ENCODE measurements at regions of chr19 and their contacts with region 1.

Region 1: DNA sequence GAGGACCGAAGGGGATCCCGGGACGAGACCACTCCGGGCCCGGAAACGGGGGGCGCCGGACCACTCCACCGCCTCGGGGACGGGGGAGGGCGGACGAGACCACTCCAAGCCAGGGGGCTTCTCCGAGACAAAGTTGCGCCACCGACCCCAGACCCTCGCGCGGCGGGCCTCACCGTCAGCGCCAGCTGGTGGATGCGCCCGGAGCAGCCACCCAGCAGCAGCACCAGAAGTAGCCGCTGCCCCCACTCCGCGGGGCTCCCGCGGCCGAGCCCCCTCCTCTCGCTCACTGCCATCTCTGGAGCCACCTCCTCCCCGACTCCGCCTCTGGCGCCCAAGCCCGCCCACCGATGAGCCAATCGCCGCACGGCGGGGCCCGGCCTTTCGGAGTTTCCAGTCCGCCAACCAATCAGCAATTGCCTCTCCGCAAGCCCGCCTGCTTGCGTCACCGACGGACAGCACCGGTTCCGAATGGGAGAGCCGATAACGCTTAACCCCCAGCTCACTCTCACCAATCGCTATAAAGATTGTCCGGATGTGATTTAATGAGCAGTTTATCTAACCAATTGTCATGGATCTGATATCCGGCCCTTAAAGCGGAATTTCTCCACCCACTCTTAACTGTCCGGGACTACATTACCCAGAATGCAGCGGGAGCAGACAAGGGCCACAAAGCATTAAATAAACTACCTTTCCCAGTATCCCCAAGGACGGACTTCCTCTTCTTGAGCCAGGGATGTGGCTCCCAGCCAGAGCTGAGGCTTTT is at the start of gene GPR108:
- DNase-seq: peak; percentile 100
- H3K4me3 Mint-ChIP-seq: peak within 1 kb of the TSS; percentile 98
- H3K27ac Mint-ChIP-seq: peak within 1 kb of the TSS; percentile 98
- H3K4me1 Mint-ChIP-seq: peaks cover 34% of the 10 kb centered on the region
- H3K27me3 Mint-ChIP-seq: no peaks in the 10 kb centered on the region
- total RNA-seq, gene GPR108: 72.1 to 75.4 TPM

Region 2: DNA sequence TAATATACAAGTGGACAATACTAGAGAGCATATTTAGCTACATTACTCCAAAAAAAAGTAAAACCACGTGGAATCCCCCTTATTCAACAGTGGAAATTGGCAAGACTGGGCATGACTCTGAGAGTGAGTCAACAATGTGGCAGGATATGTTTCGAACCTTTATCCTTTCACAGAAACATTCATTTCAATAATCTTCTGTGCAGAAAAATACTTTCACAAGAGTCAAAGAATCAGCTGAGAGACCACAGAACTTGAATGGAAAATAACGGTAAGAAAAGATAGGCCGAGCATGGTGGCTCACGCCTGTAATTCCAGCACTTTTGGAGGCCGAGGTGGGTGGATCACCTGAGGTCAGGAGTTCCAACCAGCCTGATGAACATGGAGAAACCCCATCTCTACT is 121.5 kb before region 1 on chr19:
- CTCF ChIA-PET with region 1: no interaction called
- POLR2A ChIA-PET with region 1: interaction called, 3 read pairs
- intact Hi-C with region 1: loop called (anchors 5 kb)
- DNase-seq: peak; percentile 64
- H3K4me3 Mint-ChIP-seq: no peak overlapping the region
- H3K27ac Mint-ChIP-seq: peak overlapping the region; percentile 59
- H3K4me1 Mint-ChIP-seq: peaks cover 32% of the 10 kb centered on the region
- H3K27me3 Mint-ChIP-seq: peaks cover 28% of the 10 kb centered on the region

Region 3: DNA sequence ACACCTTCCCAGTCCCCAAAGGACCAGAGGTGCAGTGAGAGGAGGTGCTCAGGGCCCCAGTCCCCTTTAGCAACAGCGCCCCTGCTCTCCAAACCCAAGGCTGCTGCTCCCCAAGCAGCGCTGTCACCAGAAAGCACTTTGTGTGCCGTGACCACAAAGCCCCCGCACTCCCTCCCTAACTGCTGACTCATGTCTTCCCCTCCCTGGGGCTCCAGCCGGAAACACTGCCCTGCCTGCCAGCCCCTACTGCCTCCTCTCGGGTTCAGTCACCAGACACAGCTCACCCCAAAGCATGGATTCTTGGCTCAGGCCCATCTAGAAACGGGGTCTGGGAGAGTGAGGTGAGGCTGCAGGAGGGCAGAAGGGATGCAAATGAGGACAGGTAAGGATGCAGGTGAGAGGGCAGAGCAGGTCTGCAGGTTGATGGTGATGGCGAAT is 62.6 kb before region 1 on chr19:
- CTCF ChIA-PET with region 1: interaction called, 7 read pairs
- POLR2A ChIA-PET with region 1: interaction called, 9 read pairs
- intact Hi-C with region 1: loop called (anchors 1 kb)
- DNase-seq: peak; percentile 98
- H3K4me3 Mint-ChIP-seq: peak overlapping the region; percentile 62
- H3K27ac Mint-ChIP-seq: peak overlapping the region; percentile 79
- H3K4me1 Mint-ChIP-seq: peaks cover 69% of the 10 kb centered on the region
- H3K27me3 Mint-ChIP-seq: peaks cover 3% of the 10 kb centered on the region

Region 4: GRCh38 chr19:6801485-6802086 is 64.1 kb after region 1 on chr19:
- CTCF ChIA-PET with region 1: interaction called, 28 read pairs
- POLR2A ChIA-PET with region 1: interaction called, 9 read pairs
- intact Hi-C with region 1: loop called (anchors 1 kb)
- DNase-seq: peak; percentile 89
- H3K4me3 Mint-ChIP-seq: peak overlapping the region; percentile 75
- H3K27ac Mint-ChIP-seq: peak overlapping the region; percentile 94
- H3K4me1 Mint-ChIP-seq: peaks cover 53% of the 10 kb centered on the region
- H3K27me3 Mint-ChIP-seq: no peaks in the 10 kb centered on the region